Activated B cell treated with CpG ODN at 0.5 μM for 24 hours (primary cell): ENCODE measurements at regions of chr10 and their contacts with region 1.

Region 1: DNA sequence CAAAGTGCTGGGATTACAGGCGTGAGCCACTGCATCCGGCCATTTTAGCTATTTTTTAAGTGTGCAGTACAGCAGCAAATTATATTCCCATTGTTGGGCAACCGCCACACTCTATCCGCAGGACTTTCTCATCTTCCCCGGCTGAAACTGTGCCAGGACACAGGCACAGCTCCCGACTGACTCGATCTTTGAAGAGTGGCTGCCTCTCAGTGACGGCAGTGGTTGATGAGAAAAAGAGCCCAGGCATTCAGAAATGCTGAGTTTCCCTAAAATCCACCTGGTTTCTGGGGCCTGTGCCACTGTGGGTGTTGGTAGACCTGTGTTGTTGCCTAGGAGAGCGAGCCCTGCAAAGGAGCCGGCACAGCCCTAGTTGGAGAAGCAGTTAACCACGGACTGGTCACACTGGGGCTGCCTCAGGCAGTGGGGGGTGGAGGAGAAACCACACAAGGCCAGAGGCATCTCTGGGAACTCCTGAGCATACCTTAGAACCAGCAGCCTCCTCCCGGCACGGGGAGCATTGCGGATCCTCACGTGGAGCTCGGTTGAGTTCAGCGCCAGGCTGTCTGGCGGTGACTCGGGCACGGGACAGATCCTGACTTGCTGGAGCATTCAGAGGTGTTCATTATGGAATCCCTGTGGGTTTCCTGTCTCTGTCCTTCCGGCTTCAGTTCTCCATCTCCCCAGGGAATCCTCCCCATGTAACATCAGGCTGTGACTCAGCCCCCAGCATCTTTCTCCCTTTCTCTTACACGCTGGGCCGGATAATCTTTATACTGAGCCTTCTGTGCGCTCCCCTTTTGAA is 16.2 kb downstream of the PFKFB3 start:
- DNase-seq: no peak
- ATAC-seq: no peak
- H3K4me3 Mint-ChIP-seq: no peak overlapping the region
- H3K27ac Mint-ChIP-seq: no peak overlapping the region
- H3K4me1 Mint-ChIP-seq: peaks cover 10% of the 10 kb centered on the region
- H3K27me3 Mint-ChIP-seq: no peaks in the 10 kb centered on the region
- CTCF ChIP-seq: no peak

Region 2: DNA sequence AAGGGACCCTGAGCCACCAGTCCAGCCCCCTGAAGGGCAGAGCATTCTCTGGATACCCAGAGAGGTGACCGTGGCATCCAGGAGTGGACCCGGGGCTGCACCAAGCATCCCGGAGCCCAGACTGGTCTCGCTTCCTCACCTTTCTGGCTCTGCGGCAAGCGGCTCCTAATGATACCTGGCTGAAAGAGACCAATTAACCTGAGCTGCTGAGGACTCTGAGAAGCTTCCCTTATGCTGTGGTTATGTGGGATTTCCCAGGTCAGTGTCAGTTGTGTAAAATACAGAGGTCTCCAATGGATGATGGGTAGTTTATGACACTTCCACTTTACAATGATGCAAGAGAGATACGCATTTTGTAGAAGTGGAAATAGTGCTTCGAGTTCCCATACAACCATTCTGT is 35.3 kb after region 1 on chr10:
- CTCF ChIA-PET with region 1: no interaction called
- POLR2A ChIA-PET with region 1: no interaction called
- intact Hi-C with region 1: loop called (anchors 5 kb)
- DNase-seq: no peak
- ATAC-seq: peak; percentile 47
- H3K4me3 Mint-ChIP-seq: no peak overlapping the region
- H3K27ac Mint-ChIP-seq: no peak overlapping the region
- H3K4me1 Mint-ChIP-seq: peaks cover 8% of the 10 kb centered on the region
- H3K27me3 Mint-ChIP-seq: no peaks in the 10 kb centered on the region
- CTCF ChIP-seq: no peak